ENCODE measurements at regions of chr12 and their contacts with region 1.

Region 1: DNA sequence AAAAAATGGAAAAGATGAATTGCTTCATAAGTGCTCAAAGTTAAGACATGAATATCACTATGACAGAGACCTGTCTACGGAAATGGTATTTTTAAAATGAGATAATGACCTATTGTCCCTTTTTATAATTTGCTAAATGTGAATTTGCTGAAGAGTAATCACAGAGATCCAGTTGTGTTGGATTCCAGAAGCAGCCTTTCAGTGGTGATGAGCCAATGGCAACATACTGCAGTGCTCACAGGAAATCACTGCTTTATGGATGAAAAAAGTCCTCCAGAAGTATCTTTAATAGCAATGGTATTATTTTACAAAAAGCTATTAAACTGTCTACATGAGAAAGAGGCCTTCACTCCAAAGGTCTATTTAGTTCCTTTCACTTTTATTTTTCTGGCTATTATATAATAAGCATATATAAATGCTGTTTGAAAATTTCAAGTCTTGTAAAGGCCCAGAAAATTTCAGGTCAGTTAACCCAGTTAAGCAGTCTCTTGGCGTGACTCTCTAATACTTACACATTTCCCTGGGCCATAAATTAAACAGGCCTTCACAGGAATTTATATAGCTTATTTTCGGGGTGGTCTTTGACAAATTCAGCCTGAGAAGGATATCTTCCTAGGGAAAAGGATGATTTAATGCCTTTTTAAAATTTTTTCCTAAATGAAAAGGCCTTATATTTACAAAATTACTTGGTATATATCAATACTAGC is 55.4 kb downstream of the KCNJ8 start:
- DNase-seq: no peak
- ATAC-seq: no peak
- H3K4me3 ChIP-seq: no peak overlapping the region
- H3K4me3 Mint-ChIP-seq: no peak overlapping the region
- H3K27ac ChIP-seq: no peak overlapping the region
- H3K27ac Mint-ChIP-seq: no peak overlapping the region
- H3K4me1 ChIP-seq: no peaks in the 10 kb centered on the region
- H3K4me1 Mint-ChIP-seq: no peaks in the 10 kb centered on the region
- H3K27me3 ChIP-seq: no peaks in the 10 kb centered on the region
- H3K27me3 Mint-ChIP-seq: peaks cover 14% of the 10 kb centered on the region
- CTCF ChIP-seq: no peak

Region 2: DNA sequence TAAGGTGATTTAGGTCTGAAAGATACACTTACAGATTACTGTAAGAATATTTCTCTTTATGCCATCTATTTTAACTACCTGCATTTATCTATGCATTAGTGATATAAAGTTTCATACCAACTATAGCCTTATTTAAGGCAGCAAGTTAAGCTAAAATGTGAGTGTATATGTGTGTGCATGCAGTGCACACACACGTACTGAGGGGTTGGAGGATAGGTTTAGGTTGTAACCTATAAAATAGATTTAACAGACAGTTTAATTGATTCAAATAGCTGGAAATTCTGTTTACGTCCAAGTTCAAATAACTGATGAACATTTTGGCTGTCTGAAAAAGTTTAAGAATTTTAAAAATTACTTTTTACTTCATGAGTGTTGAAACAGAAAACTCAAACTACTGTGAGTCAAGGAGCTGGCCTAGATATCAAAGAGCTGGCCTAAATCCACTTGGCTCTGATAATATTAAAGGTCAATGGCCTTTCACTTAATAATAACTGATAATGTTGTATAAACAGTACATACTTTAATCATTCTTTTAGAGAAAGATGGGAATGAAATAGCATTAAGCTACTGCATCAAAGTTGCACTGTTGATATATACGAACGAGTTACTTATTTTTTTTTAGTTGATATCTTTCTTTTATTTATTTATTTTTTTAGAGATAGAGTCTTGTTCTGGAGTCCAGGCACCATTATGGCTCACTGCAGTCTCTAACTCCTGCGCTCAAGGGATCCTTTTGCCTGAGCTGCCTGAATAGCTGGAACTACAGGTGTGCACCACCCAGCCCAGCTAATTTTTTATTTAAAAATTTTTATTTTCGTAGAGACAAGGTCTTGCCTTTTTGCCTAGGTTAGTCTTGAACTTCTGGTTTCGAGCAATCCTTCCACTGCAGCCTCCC is 69.2 kb after region 1 on chr12:
- CTCF ChIA-PET with region 1: no interaction called
- POLR2A ChIA-PET with region 1: no interaction called
- intact Hi-C with region 1: loop called in 1 of 2 experiments (anchors 2 kb)
- DNase-seq: no peak
- ATAC-seq: no peak
- H3K4me3 ChIP-seq: no peak overlapping the region
- H3K4me3 Mint-ChIP-seq: no peak overlapping the region
- H3K27ac ChIP-seq: no peak overlapping the region
- H3K27ac Mint-ChIP-seq: no peak overlapping the region
- H3K4me1 ChIP-seq: no peaks in the 10 kb centered on the region
- H3K4me1 Mint-ChIP-seq: no peaks in the 10 kb centered on the region
- H3K27me3 ChIP-seq: no peaks in the 10 kb centered on the region
- H3K27me3 Mint-ChIP-seq: peaks cover 8% of the 10 kb centered on the region
- CTCF ChIP-seq: no peak